ENCODE measurements at regions of chr5 and their contacts with region 1.

Region 1: DNA sequence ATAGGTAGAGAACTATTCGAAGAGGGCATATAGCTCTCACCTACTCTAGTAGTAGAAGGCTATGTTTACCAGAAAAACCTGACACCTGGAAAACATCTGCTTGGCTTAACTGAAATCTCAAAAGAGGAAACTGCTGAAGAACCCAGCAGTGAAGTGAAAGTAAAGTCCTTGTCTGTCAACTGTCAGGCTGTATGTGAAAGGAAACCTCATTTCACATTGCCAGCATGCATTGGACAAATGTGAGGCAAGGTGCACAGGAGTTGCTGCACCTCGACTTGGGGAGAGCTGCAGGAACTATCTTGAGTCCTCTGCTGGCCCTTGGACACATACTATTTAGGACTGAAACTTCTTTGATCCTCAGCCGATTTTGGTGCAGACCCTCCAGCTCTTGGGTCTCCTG is 53.3 kb downstream of the NREP start:
- DNase-seq: no peak
- H3K4me3 ChIP-seq: no peak overlapping the region
- H3K27ac ChIP-seq: no peak overlapping the region
- H3K4me1 ChIP-seq: no peaks in the 10 kb centered on the region
- H3K27me3 ChIP-seq: no peaks in the 10 kb centered on the region
- CTCF ChIP-seq: no peak

Region 2: DNA sequence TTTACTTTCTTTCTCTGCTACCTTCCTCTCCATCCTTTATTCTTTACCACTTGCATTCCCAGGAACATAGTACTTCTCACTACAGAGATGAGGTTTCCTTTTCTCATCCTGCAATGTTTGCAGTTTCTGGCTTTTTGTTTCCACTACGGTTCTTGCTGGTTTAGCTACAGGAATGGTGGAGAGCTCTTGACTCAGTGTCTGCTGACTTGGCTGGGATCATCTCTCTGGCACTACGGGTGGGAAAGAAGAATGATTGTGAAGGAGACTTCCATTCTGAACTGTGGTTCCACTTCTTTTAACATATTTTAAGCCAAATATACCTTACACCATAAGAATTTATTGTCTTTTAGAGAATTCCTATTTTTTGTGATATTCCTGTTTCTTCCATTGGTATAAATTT is 11.7 kb before region 1 on chr5:
- CTCF ChIA-PET with region 1: no interaction called
- POLR2A ChIA-PET with region 1: no interaction called
- intact Hi-C with region 1: loop called (anchors 1 kb)
- DNase-seq: no peak
- H3K4me3 ChIP-seq: no peak overlapping the region
- H3K27ac ChIP-seq: no peak overlapping the region
- H3K4me1 ChIP-seq: no peaks in the 10 kb centered on the region
- H3K27me3 ChIP-seq: no peaks in the 10 kb centered on the region
- CTCF ChIP-seq: no peak